HepG2 (cell line): ENCODE measurements at regions of chr1 and their contacts with region 1.

Region 1: DNA sequence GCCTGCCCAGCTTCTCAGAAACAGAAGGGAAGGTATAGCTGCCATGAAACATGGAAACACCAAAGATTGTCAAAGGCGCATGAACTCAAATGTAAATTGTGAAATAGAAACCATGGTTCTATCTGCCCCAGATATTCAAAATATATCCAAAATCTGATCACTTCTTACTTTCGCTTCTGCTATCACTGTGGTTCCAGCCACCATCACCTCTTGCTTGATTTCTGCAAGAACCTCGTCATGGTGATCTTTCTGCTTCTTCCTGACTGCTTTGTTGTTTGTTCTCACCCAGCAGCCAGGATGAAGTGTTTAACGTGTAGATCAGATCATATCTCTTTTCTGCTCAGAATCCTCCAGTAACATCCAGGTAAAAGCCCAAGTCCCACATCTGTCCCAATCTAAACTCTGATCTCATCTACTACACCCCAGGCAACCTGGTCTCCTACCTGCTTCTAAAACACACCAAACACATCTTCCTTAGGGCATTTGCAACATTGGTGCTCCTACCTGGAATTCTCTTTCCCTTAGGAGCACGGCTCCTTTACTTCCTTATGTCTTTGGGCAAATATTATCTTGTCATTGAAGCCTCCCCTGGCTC is 10.5 kb upstream of the LMO4 start:
- DNase-seq: no peak
- ATAC-seq: no peak
- H3K4me3 ChIP-seq: no peak overlapping the region
- H3K27ac ChIP-seq: no peak overlapping the region
- H3K4me1 ChIP-seq: no peaks in the 10 kb centered on the region
- H3K27me3 ChIP-seq: peaks cover 0 to 12% of the 10 kb centered on the region in 2 experiments; a peak in 2 of 5 replicates
- CTCF ChIP-seq: no peak
- EP300 ChIP-seq: no peak
- POLR2A ChIP-seq: no peak
- RAD21 ChIP-seq: no peak

Region 2: GRCh38 chr1:88549536-88549935 is 1231.4 kb after region 1 on chr1:
- CTCF ChIA-PET with region 1: no interaction called
- POLR2A ChIA-PET with region 1: no interaction called
- in situ Hi-C with region 1: loop called (anchors 25 kb)
- intact Hi-C with region 1: no loop called
- DNase-seq: no peak
- ATAC-seq: no peak
- H3K4me3 ChIP-seq: no peak overlapping the region
- H3K27ac ChIP-seq: no peak overlapping the region
- H3K4me1 ChIP-seq: no peaks in the 10 kb centered on the region
- H3K27me3 ChIP-seq: no peaks in the 10 kb centered on the region
- CTCF ChIP-seq: no peak
- EP300 ChIP-seq: no peak
- POLR2A ChIP-seq: no peak
- RAD21 ChIP-seq: no peak